Activated B cell treated with CpG ODN at 0.5 μM for 24 hours (primary cell): ENCODE measurements at regions of chr9 and their contacts with region 1.

Region 1: GRCh38 chr9:132240753-132241493 is 79.1 kb downstream of the NTNG2 start:
- DNase-seq: peak; percentile 98
- ATAC-seq: peak; percentile 90
- H3K4me3 Mint-ChIP-seq: peak overlapping the region; percentile 96
- H3K27ac Mint-ChIP-seq: peak overlapping the region; percentile 89
- H3K4me1 Mint-ChIP-seq: peaks cover 15% of the 10 kb centered on the region
- H3K27me3 Mint-ChIP-seq: no peaks in the 10 kb centered on the region
- CTCF ChIP-seq: no peak

Region 2: GRCh38 chr9:131349881-131350563 is 890.9 kb before region 1 on chr9:
- CTCF ChIA-PET with region 1: no interaction called
- POLR2A ChIA-PET with region 1: interaction called, 4 read pairs
- intact Hi-C with region 1: loop called (anchors 10 kb)
- DNase-seq: peak; percentile 79
- ATAC-seq: peak; percentile 97
- H3K4me3 Mint-ChIP-seq: peak overlapping the region; percentile 29
- H3K27ac Mint-ChIP-seq: no peak overlapping the region
- H3K4me1 Mint-ChIP-seq: peaks cover 6% of the 10 kb centered on the region
- H3K27me3 Mint-ChIP-seq: peaks cover 2% of the 10 kb centered on the region
- CTCF ChIP-seq: no peak

Region 3: GRCh38 chr9:131762356-131762932 is 478.5 kb before region 1 on chr9:
- CTCF ChIA-PET with region 1: interaction called, 23 read pairs
- POLR2A ChIA-PET with region 1: interaction called, 4 read pairs
- intact Hi-C with region 1: loop called (anchors 1 kb)
- DNase-seq: peak; percentile 79
- ATAC-seq: peak; percentile 98
- H3K4me3 Mint-ChIP-seq: no peak overlapping the region
- H3K27ac Mint-ChIP-seq: no peak overlapping the region
- H3K4me1 Mint-ChIP-seq: no peaks in the 10 kb centered on the region
- H3K27me3 Mint-ChIP-seq: peaks cover 15% of the 10 kb centered on the region
- CTCF ChIP-seq: peak; percentile 66

Region 4: DNA sequence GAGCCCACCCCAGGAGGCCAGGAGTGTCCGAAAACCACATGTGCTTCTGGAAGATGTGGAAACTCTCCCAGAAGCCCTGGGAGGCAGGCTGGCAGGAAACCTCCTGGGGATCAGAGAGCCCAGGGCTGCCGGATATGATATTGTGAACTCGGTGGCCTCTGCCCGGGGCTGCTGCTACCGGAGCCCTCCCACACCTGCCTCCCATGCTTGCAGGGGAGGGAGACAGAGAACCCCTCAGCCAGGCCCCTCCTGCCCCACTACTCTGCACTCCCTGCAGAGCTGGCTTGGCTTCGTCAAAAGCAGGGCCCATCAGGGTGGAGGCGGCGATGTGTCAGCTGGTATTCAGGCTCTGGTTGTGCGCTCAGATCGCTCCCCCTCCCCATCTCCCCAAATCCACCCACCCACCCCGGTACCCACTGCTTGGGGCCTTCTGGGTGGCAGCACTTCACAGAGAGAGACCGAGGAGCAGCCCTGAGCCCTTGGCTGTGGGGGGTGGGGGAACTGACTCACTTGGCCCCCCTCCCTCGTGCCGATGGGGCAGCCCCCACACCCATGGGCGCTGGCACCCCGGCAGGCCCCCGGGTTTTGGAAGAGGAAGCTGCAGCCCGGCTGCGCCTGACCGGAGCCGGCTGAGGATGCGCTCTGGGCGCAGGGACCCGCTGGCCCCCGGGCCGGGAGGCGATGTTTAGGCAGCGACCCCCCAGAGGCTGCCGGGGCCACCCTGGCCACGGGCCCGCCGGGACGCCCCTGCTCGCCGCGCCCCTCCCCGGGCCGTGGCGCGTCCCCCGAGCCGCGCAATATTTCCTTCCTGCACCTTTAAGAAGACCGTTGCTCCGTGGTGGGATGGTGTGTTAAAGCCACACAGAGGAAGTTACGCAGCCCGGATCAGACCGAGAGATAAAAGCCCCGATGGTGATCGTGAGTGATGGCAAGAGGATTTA is 79.9 kb before region 1 on chr9:
- CTCF ChIA-PET with region 1: interaction called, 4 read pairs
- POLR2A ChIA-PET with region 1: no interaction called
- intact Hi-C with region 1: loop called (anchors 2 kb)
- DNase-seq: peak; percentile 41
- ATAC-seq: peak; percentile 74
- H3K4me3 Mint-ChIP-seq: peak overlapping the region; percentile 93
- H3K27ac Mint-ChIP-seq: peak overlapping the region; percentile 67
- H3K4me1 Mint-ChIP-seq: peaks cover 9% of the 10 kb centered on the region
- H3K27me3 Mint-ChIP-seq: peaks cover 46% of the 10 kb centered on the region
- CTCF ChIP-seq: no peak

Region 5: DNA sequence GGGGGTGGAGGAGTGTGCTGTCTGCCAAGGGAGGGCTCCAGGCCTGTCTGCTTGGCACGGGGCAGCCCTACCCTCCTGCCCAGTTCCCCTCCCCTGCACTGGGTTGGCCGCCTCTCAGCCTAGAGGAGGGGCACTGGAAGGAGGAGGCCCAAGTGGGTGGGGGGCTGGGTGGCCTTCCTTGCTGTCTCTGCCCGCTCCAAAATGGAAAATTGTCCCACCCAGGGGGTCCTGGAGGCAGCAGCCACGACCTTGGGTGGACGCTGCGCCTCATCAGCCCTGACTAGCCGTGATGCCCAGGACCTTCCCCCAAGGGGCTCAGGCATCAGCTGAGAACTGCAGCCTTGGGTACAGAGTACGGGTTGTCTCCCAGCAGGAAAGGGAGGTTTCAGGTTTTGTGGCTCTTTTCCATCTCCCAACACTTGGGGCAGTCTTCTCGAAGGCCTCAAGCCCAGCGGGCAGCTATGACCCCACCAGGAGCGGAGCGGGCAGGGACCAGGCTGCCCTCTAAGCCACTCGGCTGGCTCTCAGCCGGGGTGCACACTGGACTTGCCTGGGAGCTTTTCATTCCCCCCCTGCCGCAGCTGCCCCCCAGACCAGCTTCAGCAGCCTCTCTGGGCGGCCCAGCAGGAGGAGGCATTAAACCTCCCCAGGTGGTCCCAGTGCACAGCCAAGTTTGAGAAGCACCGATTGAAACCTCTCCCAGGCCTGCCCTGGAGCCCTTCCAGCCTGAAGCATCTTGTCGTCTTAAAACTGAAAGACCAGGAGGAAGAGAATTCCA is 58.4 kb before region 1 on chr9:
- CTCF ChIA-PET with region 1: no interaction called
- POLR2A ChIA-PET with region 1: no interaction called
- intact Hi-C with region 1: no loop called
- DNase-seq: no peak
- ATAC-seq: no peak
- H3K4me3 Mint-ChIP-seq: no peak overlapping the region
- H3K27ac Mint-ChIP-seq: no peak overlapping the region
- H3K4me1 Mint-ChIP-seq: peaks cover 5% of the 10 kb centered on the region
- H3K27me3 Mint-ChIP-seq: peaks cover 39% of the 10 kb centered on the region
- CTCF ChIP-seq: no peak

Region 6: GRCh38 chr9:132260846-132261245 is 19.9 kb after region 1 on chr9:
- CTCF ChIA-PET with region 1: interaction called, 13 read pairs
- POLR2A ChIA-PET with region 1: interaction called, 8 read pairs
- intact Hi-C with region 1: loop called (anchors 1 kb)
- DNase-seq: no peak
- ATAC-seq: no peak
- H3K4me3 Mint-ChIP-seq: no peak overlapping the region
- H3K27ac Mint-ChIP-seq: no peak overlapping the region
- H3K4me1 Mint-ChIP-seq: peaks cover 10% of the 10 kb centered on the region
- H3K27me3 Mint-ChIP-seq: no peaks in the 10 kb centered on the region
- CTCF ChIP-seq: no peak

Region 7: GRCh38 chr9:132877824-132878694 is 637.1 kb after region 1 on chr9 and contains the start of gene AK8:
- CTCF ChIA-PET with region 1: no interaction called
- POLR2A ChIA-PET with region 1: no interaction called
- intact Hi-C with region 1: loop called (anchors 5 kb)
- DNase-seq: peak; percentile 87
- ATAC-seq: peak; percentile 85
- H3K4me3 Mint-ChIP-seq: peak within 1 kb of the TSS; percentile 82
- H3K27ac Mint-ChIP-seq: peak within 1 kb of the TSS; percentile 70
- H3K4me1 Mint-ChIP-seq: peaks cover 17% of the 10 kb centered on the region
- H3K27me3 Mint-ChIP-seq: no peaks in the 10 kb centered on the region
- CTCF ChIP-seq: no peak
- total RNA-seq, gene AK8: 0.93 and 1.0 TPM in 2 replicates